ENCODE measurements at regions of chr3 and their contacts with region 1.

Region 1: GRCh38 chr3:87167628-87168456 is 59.3 kb upstream of the CHMP2B start:
- DNase-seq: no peak
- ATAC-seq: no peak
- H3K4me3 ChIP-seq: peak overlapping the region; percentile 34 to 49 (median 42)
- H3K27ac ChIP-seq: no peak overlapping the region
- H3K4me1 ChIP-seq: no peaks in the 10 kb centered on the region
- H3K27me3 ChIP-seq: no peaks in the 10 kb centered on the region
- CTCF ChIP-seq: peak in 4 of 5 experiments; percentile 33 to 65 (median 52)
- POLR2A ChIP-seq: no peak

Region 2: GRCh38 chr3:86774082-86774691 is 393.7 kb before region 1 on chr3:
- in situ Hi-C with region 1: loop called in 1 of 4 experiments (anchors 10 kb)
- intact Hi-C with region 1: loop called (anchors 5 kb)
- DNase-seq: no peak
- ATAC-seq: no peak
- H3K4me3 ChIP-seq: no peak overlapping the region
- H3K27ac ChIP-seq: no peak overlapping the region
- H3K4me1 ChIP-seq: no peaks in the 10 kb centered on the region
- H3K27me3 ChIP-seq: no peaks in the 10 kb centered on the region
- CTCF ChIP-seq: peak in 3 of 5 experiments; percentile 23 to 41 (median 33)
- POLR2A ChIP-seq: no peak

Region 3: GRCh38 chr3:86969500-86970189 is 198.2 kb before region 1 on chr3:
- in situ Hi-C with region 1: loop called in 2 of 4 experiments (anchors 10 to 25 kb)
- intact Hi-C with region 1: no loop called
- DNase-seq: no peak
- ATAC-seq: no peak
- H3K4me3 ChIP-seq: no peak overlapping the region
- H3K27ac ChIP-seq: no peak overlapping the region
- H3K4me1 ChIP-seq: no peaks in the 10 kb centered on the region
- H3K27me3 ChIP-seq: no peaks in the 10 kb centered on the region
- CTCF ChIP-seq: peak in 4 of 5 experiments; percentile 5 to 40 (median 32)
- POLR2A ChIP-seq: no peak